ENCODE measurements at regions of chr14 and their contacts with region 1.

Region 1: GRCh38 chr14:38721822-38722431 is 381.1 kb downstream of the SEC23A start:
- DNase-seq: no peak

Region 2: DNA sequence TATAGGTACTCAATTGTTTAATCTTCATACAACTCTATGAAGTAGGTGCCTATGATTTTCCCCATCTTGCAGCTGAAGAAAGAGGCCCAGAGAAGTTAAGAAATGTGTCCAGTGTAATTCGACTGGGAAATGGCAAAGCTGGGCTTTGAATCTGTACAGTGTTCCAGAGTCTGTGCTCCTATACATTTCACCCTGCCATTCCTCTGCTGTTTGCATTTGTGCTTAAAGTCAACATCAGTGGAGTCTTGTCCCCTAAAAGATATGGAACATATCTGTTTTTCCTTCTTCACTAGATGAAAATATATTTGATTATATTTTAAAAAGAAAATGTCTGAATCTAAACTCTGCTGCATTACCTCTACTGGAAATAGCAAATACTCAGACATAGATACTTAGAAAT is 292.5 kb after region 1 on chr14:
- intact Hi-C with region 1: loop called (anchors 5 kb)
- DNase-seq: no peak

Measured in cardiac septum (tissue), 1 donor.